Vagina (tissue), 2 donors: ENCODE measurements at regions of chr1 and their contacts with region 1.

Region 1: GRCh38 chr1:170586321-170587252 is 54.6 kb downstream of the GORAB start:
- DNase-seq: peak in 1 of 2 donors; percentile 88
- H3K4me3 ChIP-seq: peak overlapping the region; percentile 10 to 34
- H3K27ac ChIP-seq: peak overlapping the region; percentile 87
- H3K4me1 ChIP-seq: peaks cover 33% of the 10 kb centered on the region
- H3K27me3 ChIP-seq: no peaks in the 10 kb centered on the region
- CTCF ChIP-seq: no peak
- POLR2A ChIP-seq: no peak

Region 2: GRCh38 chr1:170531758-170532657 is 54.6 kb before region 1 on chr1 and contains the start of gene GORAB:
- intact Hi-C with region 1: loop called (anchors 10 kb)
- DNase-seq: peak in 1 of 2 donors; percentile 95
- H3K4me3 ChIP-seq: peak within 1 kb of the TSS; percentile 60 to 61
- H3K27ac ChIP-seq: peak within 1 kb of the TSS; percentile 92
- H3K4me1 ChIP-seq: peaks cover 38% of the 10 kb centered on the region
- H3K27me3 ChIP-seq: no peaks in the 10 kb centered on the region
- CTCF ChIP-seq: no peak
- POLR2A ChIP-seq: peak in 1 of 2 donors; percentile 54
- total RNA-seq, gene GORAB: 11.3 TPM

Region 3: DNA sequence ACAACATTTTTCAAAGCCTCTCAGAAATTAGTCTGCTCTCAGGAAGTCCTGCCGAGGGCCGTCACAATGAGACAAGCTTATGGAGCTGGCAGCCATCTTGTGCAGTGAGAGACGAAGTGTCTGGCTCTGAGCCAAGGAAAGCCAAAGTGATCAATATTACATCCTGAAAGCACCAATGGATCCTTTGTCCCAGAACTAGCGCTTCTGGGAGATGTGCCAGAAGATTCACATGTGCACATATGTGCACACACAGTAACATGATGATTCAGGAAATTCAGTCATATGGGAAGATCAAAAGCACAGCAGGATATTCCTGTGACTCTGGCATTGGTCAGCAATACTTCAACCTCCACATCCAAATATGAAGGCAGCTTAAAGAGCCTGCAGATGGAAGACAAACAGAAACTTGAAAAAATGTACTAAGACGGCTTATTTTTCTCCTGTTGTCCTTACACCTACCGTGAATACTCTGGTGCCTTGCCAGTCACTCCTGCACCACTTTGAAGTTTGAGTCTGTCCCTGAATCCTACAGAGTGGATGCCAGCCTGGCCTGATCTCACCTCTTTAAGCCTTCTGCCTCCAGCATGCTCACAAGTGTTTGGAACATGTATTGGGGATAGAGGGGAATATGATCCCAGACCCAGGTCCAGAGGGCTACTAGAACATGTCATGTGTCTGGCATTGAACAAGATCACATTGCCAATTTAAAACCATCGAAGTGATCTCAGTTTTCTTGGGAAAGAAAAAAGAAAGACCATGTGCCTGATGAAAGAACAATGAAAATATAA is 32.8 kb after region 1 on chr1:
- intact Hi-C with region 1: no loop called
- DNase-seq: no peak
- H3K4me3 ChIP-seq: no peak overlapping the region
- H3K27ac ChIP-seq: no peak overlapping the region
- H3K4me1 ChIP-seq: no peaks in the 10 kb centered on the region
- H3K27me3 ChIP-seq: no peaks in the 10 kb centered on the region
- CTCF ChIP-seq: no peak
- POLR2A ChIP-seq: no peak